AG04450 (cell line): ENCODE measurements at regions of chr3 and their contacts with region 1.

Region 1: GRCh38 chr3:103453152-103453551 is 1018.3 kb downstream of the ZPLD1 start:
- DNase-seq: no peak
- H3K4me3 ChIP-seq: no peak overlapping the region
- H3K27ac ChIP-seq: no peak overlapping the region
- H3K27me3 ChIP-seq: no peaks in the 10 kb centered on the region
- CTCF ChIP-seq: no peak

Region 2: DNA sequence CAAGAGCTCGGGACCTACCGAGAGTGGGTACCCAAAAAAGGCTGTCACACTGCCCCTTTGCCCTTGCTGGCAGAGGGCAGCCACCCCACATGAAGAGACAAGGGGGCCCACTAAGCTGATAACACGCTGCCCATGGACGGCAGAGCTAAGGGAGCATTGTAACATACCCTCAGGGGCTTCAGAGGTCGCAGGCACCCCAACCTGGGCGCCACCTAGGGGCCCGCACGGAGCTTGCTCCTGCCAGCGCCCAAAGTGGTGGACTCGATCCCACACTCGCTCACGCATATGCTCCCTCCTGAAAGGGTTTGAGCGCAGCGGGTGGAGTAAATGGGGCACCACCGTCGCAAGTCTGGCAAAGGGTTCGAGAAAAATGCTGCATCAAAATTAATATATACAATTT is 42.9 kb before region 1 on chr3:
- CTCF ChIA-PET with region 1: no interaction called
- POLR2A ChIA-PET with region 1: no interaction called
- DNase-seq: no peak
- H3K4me3 ChIP-seq: no peak overlapping the region
- H3K27ac ChIP-seq: no peak overlapping the region
- H3K27me3 ChIP-seq: no peaks in the 10 kb centered on the region
- CTCF ChIP-seq: no peak

Region 3: DNA sequence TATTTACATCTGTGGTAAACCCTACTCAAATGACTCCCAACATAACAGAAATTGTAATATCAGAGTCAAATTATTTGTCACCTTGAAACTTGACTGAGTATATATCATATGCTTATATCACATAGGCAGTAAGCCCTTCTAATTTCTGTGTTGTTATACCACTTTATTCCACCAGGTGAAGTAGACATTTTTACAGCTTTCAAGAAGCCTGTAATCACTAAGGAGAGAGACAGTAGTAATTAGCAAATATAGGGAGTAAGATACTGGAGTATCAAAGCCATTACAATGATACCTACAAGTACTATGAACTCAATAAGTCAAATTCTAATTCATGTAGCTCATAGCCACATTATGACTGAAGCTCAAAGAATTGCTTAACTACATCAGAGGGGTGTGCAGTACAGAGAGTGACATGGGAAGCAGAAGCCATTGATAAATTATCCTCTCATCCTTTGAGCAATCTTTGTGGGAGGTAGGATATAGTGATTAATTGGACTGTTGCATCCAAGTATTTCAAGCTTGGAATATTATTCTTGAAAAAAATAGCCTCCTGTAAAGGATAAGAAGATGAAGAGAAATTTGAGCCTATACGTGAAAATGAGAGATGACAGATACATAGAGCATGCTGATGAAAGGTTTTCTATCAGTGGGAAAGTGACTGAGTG is 12.5 kb before region 1 on chr3:
- CTCF ChIA-PET with region 1: interaction called, 18 read pairs
- POLR2A ChIA-PET with region 1: no interaction called
- DNase-seq: no peak
- H3K4me3 ChIP-seq: no peak overlapping the region
- H3K27ac ChIP-seq: no peak overlapping the region
- H3K27me3 ChIP-seq: no peaks in the 10 kb centered on the region
- CTCF ChIP-seq: peak; percentile 51